ENCODE measurements at regions of chr11 and their contacts with region 1.

Region 1: GRCh38 chr11:119018074-119018938 is at the starts of genes RPS25 and TRAPPC4:
- DNase-seq: peak; percentile 93
- ATAC-seq: peak; percentile 88
- H3K4me3 ChIP-seq: peak within 1 kb of the TSS; percentile 72 to 99 (median 93)
- H3K27ac ChIP-seq: peak within 1 kb of the TSS; percentile 93
- H3K4me1 ChIP-seq: peaks cover 60% of the 10 kb centered on the region
- H3K27me3 ChIP-seq: peaks cover 0 to 4% of the 10 kb centered on the region in 2 experiments; a peak in 2 of 5 replicates
- CTCF ChIP-seq: peak; percentile 53
- EP300 ChIP-seq: peak in 1 of 2 experiments; percentile 41; a peak in 1 of 4 replicates
- POLR2A ChIP-seq: peak; percentile 86 to 88
- RAD21 ChIP-seq: 0 out of 2 replicates have a peak, but pooled peaks have one; percentile 4
- total RNA-seq, gene RPS25: 1,415 and 1,643 TPM in 2 replicates
- total RNA-seq, gene TRAPPC4: 97.4 and 124 TPM in 2 replicates

Region 2: DNA sequence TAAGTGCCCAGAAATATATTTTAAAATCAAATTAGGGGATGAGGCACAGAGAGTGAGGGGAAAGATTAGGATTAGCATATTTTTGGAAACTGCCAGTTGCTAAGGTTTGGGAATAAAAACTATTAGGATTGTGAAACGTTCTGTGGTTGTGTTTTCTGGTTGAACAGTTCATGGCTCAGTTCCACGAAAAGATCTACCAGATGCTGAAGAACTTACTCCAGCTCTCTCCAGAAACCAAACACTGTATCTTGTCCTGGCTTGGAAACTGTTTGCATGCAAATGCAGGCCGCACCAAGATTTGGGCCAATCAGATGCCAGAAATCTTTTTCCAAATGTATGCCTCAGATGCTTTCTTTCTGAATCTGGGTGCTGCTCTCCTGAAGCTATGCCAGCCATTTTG is 643.6 kb before region 1 on chr11:
- CTCF ChIA-PET with region 1: no interaction called
- POLR2A ChIA-PET with region 1: no interaction called
- in situ Hi-C with region 1: no loop called
- intact Hi-C with region 1: no loop called
- DNase-seq: no peak
- ATAC-seq: no peak
- H3K4me3 ChIP-seq: no peak overlapping the region
- H3K27ac ChIP-seq: no peak overlapping the region
- H3K4me1 ChIP-seq: no peaks in the 10 kb centered on the region
- H3K27me3 ChIP-seq: no peaks in the 10 kb centered on the region
- CTCF ChIP-seq: no peak
- EP300 ChIP-seq: no peak
- POLR2A ChIP-seq: no peak
- RAD21 ChIP-seq: no peak

Region 3: DNA sequence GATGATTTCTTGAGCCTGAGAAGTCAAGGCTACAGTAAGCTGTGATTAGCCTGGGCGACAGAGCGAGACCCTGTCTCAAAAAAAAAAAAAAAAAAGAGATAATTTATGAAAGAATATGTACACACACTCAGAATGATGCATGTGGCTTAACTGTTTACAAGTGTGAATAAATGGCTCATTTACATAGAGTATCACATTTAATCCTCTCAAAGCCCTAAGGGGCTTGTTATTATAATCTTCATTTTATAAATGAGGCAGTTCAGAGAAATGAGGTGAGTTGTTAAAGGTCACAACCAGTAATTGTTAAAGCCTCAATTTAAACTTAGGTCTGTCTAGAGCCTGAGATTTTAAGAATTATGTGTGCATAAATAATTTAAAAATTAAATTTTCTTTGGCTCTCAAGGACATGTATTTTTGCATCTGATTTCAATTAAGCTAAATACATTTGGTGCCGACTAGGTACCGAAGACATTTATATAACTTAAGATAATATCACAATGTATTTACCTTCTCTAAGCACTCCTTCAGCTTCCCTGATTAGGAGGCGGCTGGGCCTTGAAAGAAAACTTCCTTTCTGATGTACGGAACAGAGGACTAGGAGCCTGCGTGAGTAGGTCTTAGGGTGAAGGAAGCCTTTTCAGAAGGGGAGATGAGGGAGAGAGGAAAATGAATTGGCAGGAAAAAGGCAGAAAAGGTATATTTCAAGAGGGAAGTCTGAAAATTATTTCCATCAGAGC is 198.8 kb before region 1 on chr11:
- CTCF ChIA-PET with region 1: no interaction called
- POLR2A ChIA-PET with region 1: no interaction called
- in situ Hi-C with region 1: no loop called
- intact Hi-C with region 1: no loop called
- DNase-seq: no peak
- ATAC-seq: no peak
- H3K4me3 ChIP-seq: no peak overlapping the region
- H3K27ac ChIP-seq: no peak overlapping the region
- H3K4me1 ChIP-seq: no peaks in the 10 kb centered on the region
- H3K27me3 ChIP-seq: peaks cover 0 to 10% of the 10 kb centered on the region in 2 experiments; a peak in 1 of 5 replicates
- CTCF ChIP-seq: no peak
- EP300 ChIP-seq: no peak
- POLR2A ChIP-seq: no peak
- RAD21 ChIP-seq: no peak

Region 4: DNA sequence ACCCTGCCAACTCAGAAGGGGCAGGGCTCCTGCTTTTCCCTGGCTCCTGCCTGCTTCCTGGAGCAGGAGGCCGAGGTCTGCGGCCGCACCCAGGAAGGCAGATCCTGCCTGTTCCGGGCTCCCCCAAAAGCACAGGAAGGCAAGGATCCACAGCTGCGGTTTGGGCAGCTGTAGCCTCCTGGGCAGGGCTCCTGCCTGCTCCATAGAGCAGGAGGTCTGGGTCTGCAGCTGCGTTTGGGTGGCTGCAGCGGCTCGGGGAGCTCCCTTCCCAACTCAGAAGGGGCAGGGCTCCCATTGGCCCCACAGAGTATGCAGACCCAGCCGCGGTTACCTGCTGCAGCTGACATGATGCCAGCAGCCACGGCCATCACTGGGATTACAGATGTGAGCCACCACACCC is 56.7 kb before region 1 on chr11:
- CTCF ChIA-PET with region 1: no interaction called
- POLR2A ChIA-PET with region 1: no interaction called
- in situ Hi-C with region 1: no loop called
- intact Hi-C with region 1: no loop called
- DNase-seq: no peak
- ATAC-seq: peak; percentile 53
- H3K4me3 ChIP-seq: peak overlapping the region in 2 of 3 experiments; percentile 38 to 54; a peak in 3 of 6 replicates
- H3K27ac ChIP-seq: no peak overlapping the region
- H3K4me1 ChIP-seq: no peaks in the 10 kb centered on the region; the same call in 1 of the 2 replicates
- H3K27me3 ChIP-seq: peaks cover 2 to 44% of the 10 kb centered on the region in 2 experiments; a peak in 4 of 5 replicates
- CTCF ChIP-seq: no peak
- EP300 ChIP-seq: no peak
- POLR2A ChIP-seq: no peak
- RAD21 ChIP-seq: no peak

Region 5: DNA sequence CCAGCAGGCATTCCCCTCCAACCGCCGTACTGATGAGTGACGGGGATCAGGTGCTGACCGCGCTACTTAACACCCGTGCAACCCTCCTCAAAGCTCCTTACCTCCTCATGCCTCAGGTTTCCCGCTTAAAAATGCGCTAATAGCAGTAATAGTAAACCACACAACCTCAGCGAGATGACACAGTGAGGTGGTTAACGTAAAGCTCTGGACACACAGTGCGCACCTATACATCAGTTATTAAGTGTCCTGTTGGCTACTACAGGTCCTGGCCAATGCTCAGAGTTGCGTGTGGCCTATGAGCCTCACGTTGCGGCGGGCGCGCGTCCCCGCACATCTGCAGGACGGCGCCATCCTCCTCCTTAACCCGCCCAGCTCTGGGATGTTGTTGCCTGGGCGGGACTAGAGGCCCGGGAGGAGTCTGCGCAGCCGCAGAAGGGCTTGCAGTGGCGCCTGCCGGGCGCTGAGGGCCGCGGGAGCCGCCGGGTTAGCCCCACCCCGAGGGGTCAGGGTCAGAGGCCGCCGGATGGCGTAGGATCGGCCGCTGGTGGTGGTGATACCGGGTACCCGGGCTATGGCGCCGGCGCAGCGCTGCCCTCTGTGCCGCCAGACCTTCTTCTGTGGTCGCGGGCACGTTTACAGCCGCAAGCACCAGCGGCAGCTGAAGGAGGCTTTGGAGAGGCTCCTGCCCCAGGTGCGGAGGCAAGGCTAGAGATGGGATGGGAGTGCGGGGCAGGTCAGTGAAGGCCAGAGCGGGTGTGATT is 20.5 kb before region 1 on chr11 and contains the start of gene CENATAC:
- CTCF ChIA-PET with region 1: no interaction called
- POLR2A ChIA-PET with region 1: interaction called, 66 read pairs
- in situ Hi-C with region 1: no loop called
- intact Hi-C with region 1: no loop called
- DNase-seq: peak; percentile 91
- ATAC-seq: peak; percentile 95
- H3K4me3 ChIP-seq: peak within 1 kb of the TSS; percentile 79 to 91 (median 90)
- H3K27ac ChIP-seq: peak within 1 kb of the TSS; percentile 56
- H3K4me1 ChIP-seq: peaks cover 42% of the 10 kb centered on the region
- H3K27me3 ChIP-seq: no peaks in the 10 kb centered on the region; a peak in 1 of 5 replicates
- CTCF ChIP-seq: no peak
- EP300 ChIP-seq: no peak
- POLR2A ChIP-seq: peak; percentile 74 to 98
- RAD21 ChIP-seq: no peak
- total RNA-seq, gene CENATAC: 9.2 and 25.0 TPM in 2 replicates

Region 6: DNA sequence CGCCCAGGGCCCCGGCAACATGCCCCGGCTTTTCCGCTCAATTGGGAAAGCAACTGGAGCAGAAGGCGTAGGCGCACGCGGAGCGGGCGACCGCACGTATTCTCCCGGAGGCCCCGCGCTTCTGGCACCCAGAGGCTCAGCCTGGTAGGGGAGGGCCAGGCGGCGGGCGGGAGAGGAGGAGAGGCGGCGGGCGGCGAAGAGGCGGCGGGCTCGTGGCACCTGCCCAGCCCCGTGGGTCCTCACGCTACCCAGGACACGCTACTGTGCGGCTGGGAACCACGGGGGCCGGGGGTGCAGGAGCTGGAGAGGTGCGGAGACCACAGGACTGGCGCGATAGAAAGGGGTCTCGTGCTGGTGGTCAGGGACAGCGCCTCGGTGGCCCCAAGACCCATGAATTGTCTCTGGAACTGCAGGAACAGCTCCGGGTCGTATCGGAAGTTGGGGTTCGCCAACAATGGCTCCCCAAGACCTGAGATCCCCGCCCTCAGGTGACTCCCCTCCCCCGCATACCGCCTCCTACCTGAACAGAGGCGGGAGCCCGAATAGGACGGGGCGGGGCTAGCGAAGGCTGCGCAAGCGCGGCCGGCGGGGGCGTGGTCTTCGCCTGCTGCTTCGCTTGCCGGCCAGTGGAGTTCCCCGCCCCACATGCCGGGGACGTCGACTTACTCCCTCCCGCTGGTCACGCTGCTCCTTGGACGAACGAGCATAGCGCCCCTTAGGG is 12.2 kb after region 1 on chr11 and contains the start of gene SLC37A4:
- CTCF ChIA-PET with region 1: no interaction called
- POLR2A ChIA-PET with region 1: interaction called, 45 read pairs
- in situ Hi-C with region 1: no loop called
- intact Hi-C with region 1: no loop called
- DNase-seq: peak; percentile 95
- ATAC-seq: peak; percentile 63
- H3K4me3 ChIP-seq: peak within 1 kb of the TSS; percentile 74 to 82 (median 79)
- H3K27ac ChIP-seq: peak within 1 kb of the TSS; percentile 77
- H3K4me1 ChIP-seq: peaks cover 67% of the 10 kb centered on the region
- H3K27me3 ChIP-seq: no peaks in the 10 kb centered on the region; a peak in 1 of 5 replicates
- CTCF ChIP-seq: peak; percentile 97
- EP300 ChIP-seq: no peak
- POLR2A ChIP-seq: peak; percentile 14 to 83; a peak in 2 of 4 replicates
- RAD21 ChIP-seq: peak; percentile 82
- total RNA-seq, gene SLC37A4: 25.6 and 43.0 TPM in 2 replicates

Region 7: GRCh38 chr11:119057000-119057769 is 38.9 kb after region 1 on chr11 and contains the start of gene HYOU1:
- CTCF ChIA-PET with region 1: no interaction called
- POLR2A ChIA-PET with region 1: interaction called, 11 read pairs
- in situ Hi-C with region 1: no loop called
- intact Hi-C with region 1: loop called (anchors 1 kb)
- DNase-seq: peak; percentile 93
- ATAC-seq: peak; percentile 92
- H3K4me3 ChIP-seq: peak within 1 kb of the TSS; percentile 75 to 87 (median 82)
- H3K27ac ChIP-seq: peak within 1 kb of the TSS; percentile 88
- H3K4me1 ChIP-seq: peaks cover 23% of the 10 kb centered on the region
- H3K27me3 ChIP-seq: no peaks in the 10 kb centered on the region
- CTCF ChIP-seq: peak; percentile 51; the same call in 1 of the 2 replicates
- EP300 ChIP-seq: no peak
- POLR2A ChIP-seq: peak; percentile 72 to 75
- RAD21 ChIP-seq: peak; percentile 55
- total RNA-seq, gene HYOU1: 50.0 and 127 TPM in 2 replicates

Region 8: GRCh38 chr11:119084663-119085436 is 66.5 kb after region 1 on chr11 and contains the start of gene HMBS:
- CTCF ChIA-PET with region 1: no interaction called
- POLR2A ChIA-PET with region 1: interaction called, 11 read pairs
- in situ Hi-C with region 1: no loop called
- intact Hi-C with region 1: no loop called
- DNase-seq: peak; percentile 92
- ATAC-seq: peak; percentile 89
- H3K4me3 ChIP-seq: peak within 1 kb of the TSS; percentile 71 to 93 (median 77)
- H3K27ac ChIP-seq: peak within 1 kb of the TSS; percentile 98
- H3K4me1 ChIP-seq: peaks cover 30% of the 10 kb centered on the region
- H3K27me3 ChIP-seq: no peaks in the 10 kb centered on the region; a peak in 1 of 5 replicates
- CTCF ChIP-seq: no peak
- EP300 ChIP-seq: no peak
- POLR2A ChIP-seq: peak; percentile 83 to 93
- RAD21 ChIP-seq: peak; percentile 45; the same call in 1 of the 2 replicates
- total RNA-seq, gene HMBS: 9.4 and 14.0 TPM in 2 replicates

Measured in HepG2 (cell line).